Activated naive CD4-positive, alpha-beta T cell treated with anti-CD3 and anti-CD28 coated beads for 36 hours (primary cell): ENCODE measurements at regions of chr16 and their contacts with region 1.

Region 1: GRCh38 chr16:50273681-50274325 is 7.5 kb downstream of the ADCY7 start:
- DNase-seq: peak; percentile 70
- H3K4me3 Mint-ChIP-seq: peak overlapping the region; percentile 91
- H3K27ac Mint-ChIP-seq: peak overlapping the region; percentile 99
- H3K4me1 Mint-ChIP-seq: peaks cover 94% of the 10 kb centered on the region
- H3K27me3 Mint-ChIP-seq: no peaks in the 10 kb centered on the region

Region 2: DNA sequence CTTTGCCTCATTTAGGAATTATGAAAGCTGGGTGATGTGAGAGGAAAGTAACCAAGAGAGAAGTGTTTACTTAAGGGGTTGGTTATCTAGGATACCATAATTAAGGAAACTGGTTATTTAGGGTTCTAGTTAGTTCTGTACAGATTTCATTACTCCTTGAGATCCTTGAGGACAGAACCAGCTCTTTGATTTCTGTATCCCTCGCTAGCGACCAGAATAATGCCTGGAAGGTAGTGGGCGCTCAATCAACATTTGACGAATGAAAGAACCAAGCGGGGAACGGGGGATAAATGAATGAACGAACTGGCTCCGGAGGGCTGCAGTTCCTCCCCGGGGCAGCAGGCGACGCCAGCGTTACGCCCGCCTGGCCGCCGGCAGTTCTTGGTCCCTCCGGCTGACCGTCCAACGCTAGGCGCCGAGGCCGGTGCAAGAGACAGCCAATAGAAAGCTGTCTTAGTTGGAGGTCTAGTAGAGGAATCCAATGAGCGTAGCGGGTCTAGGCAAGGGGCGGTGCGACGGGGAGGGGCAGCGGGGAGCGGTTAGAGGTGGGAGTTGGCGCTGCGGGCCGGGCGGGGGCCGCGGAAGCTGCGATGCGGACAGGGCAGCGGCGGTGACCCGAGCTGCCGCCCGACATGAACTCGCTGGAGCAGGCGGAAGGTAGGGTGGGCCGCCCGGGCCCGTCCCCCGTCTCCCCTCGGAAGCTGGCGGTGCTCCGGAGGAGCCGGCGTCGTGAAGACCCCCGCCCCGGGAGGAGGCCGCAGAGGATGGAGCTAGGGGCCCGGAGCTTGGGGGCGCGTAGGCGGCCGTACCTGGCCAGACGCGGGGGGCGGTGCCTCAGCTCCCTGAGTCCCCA is 248.9 kb before region 1 on chr16 and contains the start of gene CNEP1R1:
- CTCF ChIA-PET with region 1: interaction called, 8 read pairs
- intact Hi-C with region 1: loop called (anchors 5 kb)
- DNase-seq: peak; percentile 94
- H3K4me3 Mint-ChIP-seq: peak within 1 kb of the TSS; percentile 91
- H3K27ac Mint-ChIP-seq: peak within 1 kb of the TSS; percentile 82
- H3K4me1 Mint-ChIP-seq: peaks cover 22% of the 10 kb centered on the region
- H3K27me3 Mint-ChIP-seq: no peaks in the 10 kb centered on the region
- total RNA-seq, gene CNEP1R1: 28.2 to 30.9 TPM

Region 3: GRCh38 chr16:50166511-50167500 is 107.0 kb before region 1 on chr16:
- CTCF ChIA-PET with region 1: interaction called, 3 read pairs
- intact Hi-C with region 1: loop called (anchors 5 kb)
- DNase-seq: peak; percentile 50
- H3K4me3 Mint-ChIP-seq: peak overlapping the region; percentile 23
- H3K27ac Mint-ChIP-seq: peak overlapping the region; percentile 71
- H3K4me1 Mint-ChIP-seq: peaks cover 66% of the 10 kb centered on the region
- H3K27me3 Mint-ChIP-seq: no peaks in the 10 kb centered on the region

Region 4: DNA sequence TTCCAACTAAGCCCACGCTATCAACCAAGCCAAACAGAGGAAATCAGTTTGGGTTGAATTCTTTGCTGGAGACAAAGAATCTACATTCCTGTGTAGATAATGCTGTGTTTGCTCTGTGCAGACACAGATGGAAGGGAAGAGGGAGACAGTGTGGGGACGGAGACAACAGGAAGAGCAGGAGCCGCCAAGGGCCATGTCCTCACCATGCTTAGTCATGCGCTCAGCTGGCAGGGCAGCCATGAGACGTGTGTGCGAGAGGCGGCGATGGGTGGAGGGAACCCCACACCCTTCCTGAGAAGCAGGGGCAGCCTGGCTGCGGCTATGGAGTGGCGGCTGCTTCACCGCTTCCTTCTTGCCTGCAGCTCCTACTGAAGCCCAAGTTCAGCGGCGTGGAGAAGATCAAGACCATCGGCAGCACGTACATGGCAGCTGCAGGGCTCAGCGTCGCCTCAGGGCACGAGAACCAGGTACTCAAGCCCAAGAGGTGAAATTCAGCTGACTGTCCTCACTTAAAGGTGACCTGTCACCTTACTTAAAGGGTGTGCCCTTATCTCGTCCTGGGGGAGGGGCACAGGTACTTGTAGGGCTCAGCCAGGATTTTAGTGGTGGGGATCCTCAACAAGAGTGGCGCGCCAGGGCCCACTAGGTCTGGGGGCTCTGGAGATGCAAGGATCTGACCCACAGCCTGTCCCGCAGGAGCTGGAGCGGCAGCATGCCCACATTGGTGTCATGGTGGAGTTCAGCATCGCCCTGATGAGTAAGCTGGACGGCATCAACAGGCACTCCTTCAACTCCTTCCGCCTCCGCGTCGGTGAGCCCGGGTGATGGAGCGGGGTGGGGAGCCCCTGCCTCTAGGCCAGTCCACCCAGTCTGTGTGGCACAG is 40.0 kb after region 1 on chr16:
- CTCF ChIA-PET with region 1: no interaction called
- intact Hi-C with region 1: no loop called
- DNase-seq: peak; percentile 67
- H3K4me3 Mint-ChIP-seq: no peak overlapping the region
- H3K27ac Mint-ChIP-seq: peak overlapping the region; percentile 79
- H3K4me1 Mint-ChIP-seq: peaks cover 16% of the 10 kb centered on the region
- H3K27me3 Mint-ChIP-seq: no peaks in the 10 kb centered on the region

Region 5: DNA sequence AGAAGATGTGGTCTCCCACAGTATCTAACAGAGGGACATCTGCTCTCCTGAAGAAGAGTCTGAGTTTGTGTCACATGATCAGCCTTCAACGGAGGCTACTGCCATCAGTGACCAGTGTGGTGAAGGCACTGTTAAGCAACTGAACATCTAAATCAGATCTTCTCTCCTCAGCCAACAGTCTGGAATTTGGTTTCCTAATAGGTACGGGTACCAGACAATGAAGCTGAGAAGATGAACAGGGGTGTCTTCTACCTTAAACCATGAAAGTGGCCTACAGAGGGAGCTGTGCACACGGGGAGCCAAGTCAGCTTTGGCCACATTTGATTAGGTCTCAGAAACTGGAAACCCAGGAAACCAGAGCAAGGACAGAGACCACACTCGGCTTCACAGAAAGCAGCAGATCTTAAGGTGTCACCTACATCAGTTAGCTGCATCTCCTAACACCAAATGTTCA is 53.2 kb after region 1 on chr16:
- CTCF ChIA-PET with region 1: interaction called, 13 read pairs
- intact Hi-C with region 1: no loop called
- DNase-seq: peak; percentile 81
- H3K4me3 Mint-ChIP-seq: no peak overlapping the region
- H3K27ac Mint-ChIP-seq: peak overlapping the region; percentile 50
- H3K4me1 Mint-ChIP-seq: peaks cover 56% of the 10 kb centered on the region
- H3K27me3 Mint-ChIP-seq: no peaks in the 10 kb centered on the region

Region 6: DNA sequence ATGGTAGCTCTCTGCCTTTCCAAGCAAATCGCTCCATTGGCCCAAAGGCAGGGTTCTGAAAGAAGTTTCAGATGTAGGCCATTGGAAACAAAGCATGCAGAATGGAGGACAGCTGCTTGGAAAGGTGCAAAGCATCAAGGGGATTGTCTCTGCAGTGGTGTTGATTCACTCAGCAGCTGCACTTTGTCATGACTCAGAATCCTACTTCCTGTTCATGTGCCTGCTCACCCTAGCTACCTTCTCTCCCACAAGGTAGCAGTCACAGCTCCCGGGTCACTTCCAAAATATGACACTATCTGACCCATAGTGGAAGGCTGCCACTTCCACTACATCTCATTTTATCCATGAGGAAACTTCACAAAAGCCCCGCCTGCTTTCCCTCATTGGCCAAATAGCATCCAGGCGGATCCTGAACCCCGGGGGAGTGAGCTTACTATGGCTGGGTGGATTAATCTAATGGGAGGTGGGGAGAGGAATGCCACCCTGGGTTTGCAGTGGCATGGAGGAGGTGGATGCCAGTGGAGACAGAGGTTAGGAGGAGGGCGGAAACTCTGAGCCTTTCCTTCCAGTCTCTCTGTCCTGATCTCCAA is 199.6 kb after region 1 on chr16:
- CTCF ChIA-PET with region 1: no interaction called
- intact Hi-C with region 1: loop called (anchors 5 kb)
- DNase-seq: peak; percentile 66
- H3K4me3 Mint-ChIP-seq: no peak overlapping the region
- H3K27ac Mint-ChIP-seq: peak overlapping the region; percentile 51
- H3K4me1 Mint-ChIP-seq: peaks cover 23% of the 10 kb centered on the region
- H3K27me3 Mint-ChIP-seq: peaks cover 4% of the 10 kb centered on the region

Region 7: DNA sequence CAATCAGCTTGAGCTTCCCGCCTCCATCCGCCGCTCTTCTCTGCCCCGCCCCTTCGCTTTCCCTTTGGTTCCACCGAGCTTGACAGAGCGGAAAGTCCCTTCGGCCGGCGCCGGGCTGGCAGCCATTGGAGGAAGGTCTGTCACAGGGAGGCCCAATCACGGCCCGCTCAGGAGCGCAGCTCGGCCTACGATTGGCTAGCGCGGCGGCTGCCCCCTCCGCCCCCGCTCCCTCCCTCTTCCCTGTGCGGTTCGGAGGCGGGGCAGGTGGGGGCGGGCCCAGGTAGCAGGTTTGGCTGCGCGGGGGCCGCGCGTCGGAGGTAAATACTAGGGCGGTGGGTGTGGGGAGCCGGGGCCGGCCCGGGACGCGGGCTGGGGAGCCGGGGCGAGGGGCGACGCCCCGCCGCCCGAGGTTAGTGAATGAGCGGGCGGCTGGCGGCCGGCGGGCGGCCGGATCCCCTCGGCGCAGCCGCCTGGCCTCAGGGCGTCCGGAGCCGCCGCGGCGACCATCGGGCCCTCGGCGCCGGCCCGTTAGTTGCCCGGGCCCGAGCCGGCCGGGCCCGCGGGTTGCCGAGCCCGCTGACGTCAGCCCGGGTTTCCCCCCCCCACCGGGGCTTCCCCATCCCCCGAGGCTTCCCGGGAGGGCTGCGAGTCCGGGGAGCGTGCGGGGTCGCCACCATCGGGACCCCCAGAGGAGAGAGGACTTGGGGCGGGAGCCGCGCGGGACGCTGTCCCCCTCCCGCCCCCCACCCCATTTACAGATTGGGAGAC is 468.2 kb after region 1 on chr16 and contains the start of gene CYLD:
- CTCF ChIA-PET with region 1: no interaction called
- intact Hi-C with region 1: loop called (anchors 1 kb)
- DNase-seq: peak; percentile 100
- H3K4me3 Mint-ChIP-seq: peak within 1 kb of the TSS; percentile 90
- H3K27ac Mint-ChIP-seq: peak within 1 kb of the TSS; percentile 96
- H3K4me1 Mint-ChIP-seq: peaks cover 42% of the 10 kb centered on the region
- H3K27me3 Mint-ChIP-seq: no peaks in the 10 kb centered on the region
- total RNA-seq, gene CYLD: 70.8 to 71.9 TPM

Region 8: DNA sequence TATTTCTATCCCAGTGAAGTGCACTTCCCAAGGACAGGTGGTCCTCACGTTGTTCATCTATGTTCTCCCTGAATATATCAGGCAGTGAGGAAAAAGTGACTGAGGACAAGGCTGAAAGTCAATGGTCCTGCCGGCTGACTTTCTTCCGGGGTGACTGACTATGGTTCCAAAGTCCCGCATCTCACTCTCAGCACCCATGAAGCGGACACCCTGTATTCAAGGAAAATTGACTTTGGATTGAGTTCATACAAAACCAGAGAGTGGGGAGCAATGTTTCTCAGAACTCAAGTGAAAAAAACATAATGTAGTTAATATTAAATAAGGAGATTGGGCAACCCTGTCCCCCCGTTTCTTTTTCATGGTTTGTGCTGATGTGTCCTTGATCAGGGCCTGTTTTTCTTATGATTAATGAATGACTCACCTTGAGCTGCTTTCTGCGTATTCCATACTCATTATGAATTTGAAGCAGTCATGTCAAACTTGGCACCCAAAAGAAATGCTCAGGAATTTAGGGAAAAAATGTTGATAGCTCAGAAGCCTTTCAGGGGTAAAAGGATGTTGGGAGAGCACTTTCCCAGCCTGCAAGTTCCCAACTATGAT is 652.1 kb after region 1 on chr16:
- CTCF ChIA-PET with region 1: no interaction called
- intact Hi-C with region 1: no loop called
- DNase-seq: no peak
- H3K4me3 Mint-ChIP-seq: no peak overlapping the region
- H3K27ac Mint-ChIP-seq: no peak overlapping the region
- H3K4me1 Mint-ChIP-seq: no peaks in the 10 kb centered on the region
- H3K27me3 Mint-ChIP-seq: peaks cover 16% of the 10 kb centered on the region